GM13976 (cell line): ENCODE measurements at regions of chr3 and their contacts with region 1.

Region 1: DNA sequence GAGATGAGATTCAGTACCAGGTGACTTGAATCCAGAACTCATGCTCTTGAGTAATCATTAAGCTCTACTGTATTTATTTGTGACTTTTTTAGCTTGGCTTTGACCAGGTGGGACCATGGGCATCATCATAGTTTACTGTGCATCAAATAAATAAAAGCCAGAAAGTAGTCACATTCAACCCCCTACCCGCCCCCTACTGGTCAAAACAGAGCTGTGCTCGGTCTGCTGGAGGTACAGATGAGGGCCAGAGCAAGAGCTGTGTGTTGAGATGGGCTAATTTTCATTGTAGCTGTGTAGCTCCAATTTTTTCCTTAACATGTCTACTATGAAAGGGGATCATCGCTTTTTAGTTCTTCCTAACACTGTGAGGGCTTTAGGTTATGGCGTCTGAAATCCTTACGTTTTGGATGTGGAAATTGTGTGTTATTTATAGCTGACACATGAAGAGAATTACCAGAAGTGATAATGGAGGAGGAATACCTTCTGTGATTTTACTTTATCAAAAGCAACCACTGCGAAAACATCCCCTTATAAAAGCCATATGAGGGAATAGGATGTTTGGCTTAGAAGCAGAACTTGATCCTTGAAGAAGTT is 375.1 kb downstream of the PTPRG start:
- DNase-seq: peak; percentile 35
- CTCF ChIP-seq: peak; percentile 66

Region 2: DNA sequence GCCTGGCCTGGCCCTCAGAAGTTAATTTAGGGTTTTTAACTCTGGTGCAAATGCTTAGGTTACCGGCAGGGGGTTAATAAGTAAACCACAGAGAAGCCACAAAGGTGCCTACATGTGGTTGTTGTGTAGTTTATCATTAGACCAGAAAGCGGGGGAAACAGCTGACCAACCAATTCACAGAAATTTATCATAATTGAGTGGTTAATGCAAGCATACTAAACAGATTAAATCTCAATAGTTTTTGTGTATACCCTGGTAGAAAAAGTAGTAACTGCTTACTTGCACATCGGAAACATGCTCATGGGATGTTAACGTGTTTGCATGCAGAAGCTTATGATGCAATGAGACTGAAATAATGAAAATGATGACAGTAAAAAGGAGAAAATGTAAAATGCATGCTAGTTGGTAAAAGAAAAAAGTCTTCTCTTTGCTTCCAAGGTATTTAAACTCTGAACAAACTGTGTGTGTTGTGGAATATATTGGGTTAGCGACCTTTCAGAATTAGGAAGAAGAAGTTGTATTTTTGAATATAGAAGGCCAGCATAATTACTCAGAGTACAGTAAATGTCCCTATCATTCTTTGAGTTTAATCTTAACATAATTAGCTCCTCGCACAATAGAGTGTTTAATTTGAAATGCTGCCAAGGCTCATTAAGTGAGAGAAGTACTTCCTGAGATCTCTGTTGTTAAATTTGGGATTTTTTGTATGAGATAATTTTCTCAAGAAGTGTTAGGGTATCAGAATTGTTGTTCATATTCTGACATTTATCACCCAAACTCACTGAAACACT is 58.9 kb before region 1 on chr3:
- in situ Hi-C with region 1: loop called (anchors 10 kb)
- DNase-seq: peak; percentile 17
- CTCF ChIP-seq: no peak